ENCODE measurements at regions of chr5 and their contacts with region 1.

Region 1: DNA sequence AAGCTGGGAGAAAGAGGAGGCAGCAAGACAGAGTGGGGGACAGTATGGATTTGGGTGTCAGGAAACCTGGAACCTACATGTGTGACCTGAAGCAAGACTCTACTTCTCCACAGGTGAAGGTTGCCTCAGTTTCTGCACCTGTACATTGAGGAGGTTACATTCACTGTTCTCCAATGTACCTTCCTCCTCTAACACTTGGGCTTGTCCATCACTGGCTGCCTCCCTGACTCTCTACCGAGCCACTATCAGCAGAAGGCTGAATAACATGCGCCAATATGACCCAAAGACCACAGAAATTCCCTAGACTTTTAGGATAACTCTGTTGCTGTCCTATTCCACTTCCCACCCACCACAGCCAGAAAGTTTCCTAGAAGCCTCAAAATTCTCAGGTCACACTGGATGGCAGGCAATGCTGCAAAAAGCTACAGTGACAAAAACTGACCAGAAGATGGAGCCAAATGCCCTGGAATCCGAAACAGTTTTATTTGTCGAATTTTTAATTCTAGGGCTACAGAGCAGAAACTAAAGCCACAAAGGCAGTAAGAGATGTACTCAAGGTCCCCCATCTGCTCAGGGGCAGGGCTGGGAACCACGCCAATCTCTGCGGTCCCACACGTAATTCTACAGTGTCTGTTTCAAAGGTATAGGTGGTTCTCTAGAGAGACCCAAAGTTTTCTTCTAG is 64.4 kb downstream of the FAM114A2 start:
- DNase-seq: peak in 1 of 2 donors; percentile 68
- ATAC-seq: peak; percentile 47 to 67 (median 64)
- H3K4me3 ChIP-seq: no peak overlapping the region
- H3K4me3 Mint-ChIP-seq: no peak overlapping the region
- H3K27ac ChIP-seq: no peak overlapping the region
- H3K27ac Mint-ChIP-seq: no peak overlapping the region
- H3K4me1 ChIP-seq: no peaks in the 10 kb centered on the region
- H3K4me1 Mint-ChIP-seq: no peaks in the 10 kb centered on the region
- H3K27me3 ChIP-seq: no peaks in the 10 kb centered on the region
- H3K27me3 Mint-ChIP-seq: peaks cover 0 to 16% of the 10 kb centered on the region in 2 donors
- CTCF ChIP-seq: peak; percentile 57

Region 2: DNA sequence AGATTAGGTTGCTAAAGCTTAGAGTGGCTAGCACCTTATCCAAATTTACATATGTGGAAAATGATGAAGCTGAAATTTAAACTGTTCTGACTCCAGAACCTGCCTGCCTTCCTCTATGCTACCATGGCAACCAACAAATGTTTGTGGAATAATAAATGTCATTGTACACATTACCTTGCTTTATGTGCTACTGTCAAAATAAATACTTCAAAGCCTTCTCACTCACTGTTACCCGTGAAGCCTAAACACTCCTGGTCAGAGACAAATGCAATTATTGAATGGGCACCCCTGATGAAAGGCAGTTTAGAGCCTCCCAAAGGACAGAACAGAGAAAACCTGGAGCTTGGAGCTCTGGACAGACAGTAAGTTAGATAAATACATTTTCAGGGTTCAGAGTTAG is 94.2 kb before region 1 on chr5:
- intact Hi-C with region 1: no loop called
- DNase-seq: no peak
- ATAC-seq: no peak
- H3K4me3 ChIP-seq: no peak overlapping the region
- H3K4me3 Mint-ChIP-seq: no peak overlapping the region
- H3K27ac ChIP-seq: no peak overlapping the region
- H3K27ac Mint-ChIP-seq: no peak overlapping the region
- H3K4me1 ChIP-seq: no peaks in the 10 kb centered on the region
- H3K4me1 Mint-ChIP-seq: no peaks in the 10 kb centered on the region
- H3K27me3 ChIP-seq: no peaks in the 10 kb centered on the region
- H3K27me3 Mint-ChIP-seq: peaks cover 5 to 17% of the 10 kb centered on the region in 2 donors
- CTCF ChIP-seq: no peak

Region 3: DNA sequence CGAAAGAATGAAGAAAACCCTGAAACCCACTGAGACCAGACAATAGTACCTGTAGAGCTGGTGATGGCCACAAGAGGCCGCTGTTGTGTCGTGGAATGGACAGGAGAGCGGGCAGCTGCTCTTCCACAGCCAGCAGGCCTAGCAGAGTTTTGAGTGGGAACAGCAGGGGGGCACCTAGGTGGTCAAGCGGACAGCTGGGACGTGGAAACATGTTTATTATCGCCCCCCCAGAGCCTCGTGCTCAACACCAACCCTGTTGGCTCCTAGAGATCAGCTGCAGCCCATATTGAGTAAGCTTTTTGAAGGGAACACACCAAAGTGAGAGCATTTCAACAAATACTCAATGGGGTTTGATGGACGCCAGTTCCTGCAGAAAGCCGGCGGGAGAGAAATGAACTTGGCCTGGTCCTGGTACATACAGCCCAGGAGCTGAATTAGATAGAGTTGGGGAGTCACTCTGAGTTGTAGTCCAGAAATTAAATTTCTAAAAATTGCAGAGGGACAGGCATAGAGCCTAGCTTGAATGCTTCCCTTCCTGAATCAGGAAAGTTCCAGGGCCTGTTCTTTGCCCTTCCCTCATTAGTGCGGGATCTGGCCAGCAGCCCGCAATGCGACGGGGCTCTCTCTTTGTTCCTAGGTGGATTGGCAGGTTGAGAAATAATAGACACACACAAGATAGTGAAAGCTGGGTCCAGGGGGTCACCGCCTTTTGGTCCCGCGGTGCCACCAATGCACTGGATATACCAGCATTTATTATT is 98.3 kb after region 1 on chr5:
- intact Hi-C with region 1: no loop called
- DNase-seq: peak; percentile 82 to 91
- ATAC-seq: peak; percentile 90 to 92 (median 90)
- H3K4me3 ChIP-seq: no peak overlapping the region
- H3K4me3 Mint-ChIP-seq: no peak overlapping the region
- H3K27ac ChIP-seq: no peak overlapping the region
- H3K27ac Mint-ChIP-seq: peak overlapping the region; percentile 64 to 72
- H3K4me1 ChIP-seq: peaks cover 16% of the 10 kb centered on the region
- H3K4me1 Mint-ChIP-seq: peaks cover 16 to 30% of the 10 kb centered on the region in 2 donors
- H3K27me3 ChIP-seq: no peaks in the 10 kb centered on the region
- H3K27me3 Mint-ChIP-seq: no peaks in the 10 kb centered on the region
- CTCF ChIP-seq: peak; percentile 92

Region 4: GRCh38 chr5:154179846-154180710 is 205.8 kb after region 1 on chr5:
- intact Hi-C with region 1: loop called (anchors 5 kb)
- DNase-seq: peak in 1 of 2 donors; percentile 74
- ATAC-seq: peak; percentile 84 to 99 (median 98)
- H3K4me3 ChIP-seq: no peak overlapping the region
- H3K4me3 Mint-ChIP-seq: no peak overlapping the region
- H3K27ac ChIP-seq: no peak overlapping the region
- H3K27ac Mint-ChIP-seq: no peak overlapping the region
- H3K4me1 ChIP-seq: no peaks in the 10 kb centered on the region
- H3K4me1 Mint-ChIP-seq: peaks cover 0 to 10% of the 10 kb centered on the region in 2 donors
- H3K27me3 ChIP-seq: no peaks in the 10 kb centered on the region
- H3K27me3 Mint-ChIP-seq: peaks cover 0 to 11% of the 10 kb centered on the region in 2 donors
- CTCF ChIP-seq: peak; percentile 78

Region 5: DNA sequence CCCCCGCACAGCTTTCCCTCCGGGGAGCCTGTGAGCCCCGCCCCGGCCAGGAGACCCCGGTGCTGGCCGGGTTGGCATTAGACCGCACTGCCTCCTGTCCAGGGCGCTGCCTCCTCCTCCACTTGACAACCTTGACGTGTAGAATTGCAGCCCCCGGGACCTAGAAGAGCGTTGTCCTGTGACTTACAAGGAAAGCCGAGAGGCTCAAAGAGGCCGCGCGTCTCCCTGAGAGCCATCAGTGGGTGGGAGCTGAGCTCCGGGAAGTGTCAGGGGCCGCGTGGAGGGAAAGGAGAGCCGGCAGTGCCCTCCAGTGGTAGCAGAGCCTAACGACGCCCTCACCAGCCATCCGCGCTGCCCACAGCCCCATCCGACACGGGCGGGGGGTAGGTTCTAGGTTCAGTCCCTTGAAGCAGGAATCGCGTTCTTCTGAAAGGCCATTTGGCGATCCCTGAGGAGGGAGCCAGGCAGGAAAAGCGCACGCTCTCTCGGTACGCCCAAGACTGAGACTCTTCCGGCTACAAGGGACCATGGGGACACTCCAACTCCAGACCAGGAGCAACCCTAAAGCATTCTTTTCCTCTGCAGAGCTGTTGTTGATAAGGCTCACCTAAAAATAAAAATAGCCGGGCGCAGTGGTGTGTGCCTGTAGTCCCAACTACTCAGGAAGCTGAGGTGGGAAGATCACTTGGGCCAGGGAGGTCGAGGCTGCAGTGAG is 431.0 kb after region 1 on chr5:
- intact Hi-C with region 1: loop called (anchors 1 kb)
- DNase-seq: peak; percentile 68 to 83
- ATAC-seq: peak; percentile 93 to 100 (median 99)
- H3K4me3 ChIP-seq: no peak overlapping the region
- H3K4me3 Mint-ChIP-seq: peak overlapping the region; percentile 32
- H3K27ac ChIP-seq: no peak overlapping the region
- H3K27ac Mint-ChIP-seq: peak overlapping the region; percentile 45 to 78
- H3K4me1 ChIP-seq: peaks cover 9% of the 10 kb centered on the region
- H3K4me1 Mint-ChIP-seq: peaks cover 13 to 25% of the 10 kb centered on the region in 2 donors
- H3K27me3 ChIP-seq: no peaks in the 10 kb centered on the region
- H3K27me3 Mint-ChIP-seq: no peaks in the 10 kb centered on the region
- CTCF ChIP-seq: peak; percentile 85

Measured in natural killer cell (primary cell).